Activated CD4-positive, alpha-beta T cell treated with anti-CD3 and anti-CD28 coated beads, Interleukin-2, amount 10 ng/mL, durations not matched to agents 24 days and 14 days (primary cell): ENCODE measurements at regions of chr19 and their contacts with region 1.

Region 1: DNA sequence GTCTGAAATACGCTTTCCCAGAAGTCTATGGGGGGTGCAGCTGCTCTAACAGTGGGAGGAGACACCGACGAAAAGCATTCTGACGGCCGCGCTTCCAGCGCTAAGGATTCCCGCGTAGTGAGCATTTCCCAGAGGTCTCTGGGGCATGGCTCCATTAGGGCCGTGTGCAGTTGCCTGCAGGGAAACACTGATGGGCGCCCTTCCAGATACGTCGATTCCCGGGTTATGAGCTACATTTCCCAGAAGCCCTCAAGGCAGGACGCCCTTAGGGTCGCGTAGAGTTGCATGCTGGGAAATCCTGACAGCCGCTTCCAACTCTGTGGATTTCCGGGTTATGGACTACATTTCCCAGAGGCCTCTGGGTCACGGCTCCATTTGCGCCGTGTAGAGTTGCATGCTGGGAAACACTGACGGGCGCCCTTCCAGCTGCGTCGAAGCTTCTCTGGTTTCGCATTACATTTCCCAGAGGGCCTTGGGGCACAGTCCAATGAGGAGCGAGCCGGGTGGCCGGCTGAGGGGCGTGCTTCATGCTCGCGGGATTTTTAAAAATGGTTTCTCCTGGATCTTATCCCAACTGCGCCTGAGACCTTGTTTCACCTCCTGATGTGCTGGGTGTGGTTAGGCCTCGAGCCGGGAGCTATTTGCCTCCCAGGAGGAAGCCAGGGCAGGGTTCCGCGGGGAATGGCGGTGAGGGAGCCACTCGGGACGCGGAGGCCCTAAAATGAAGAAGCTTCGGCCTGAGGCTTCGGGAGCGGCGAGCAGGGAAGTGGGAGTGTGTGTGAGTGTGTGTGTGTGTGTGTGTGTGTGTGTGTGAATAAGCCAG is 17.2 kb upstream of the ZNF331 start:
- DNase-seq: peak; percentile 95
- H3K4me3 Mint-ChIP-seq: peak overlapping the region; percentile 100
- H3K27ac Mint-ChIP-seq: peak overlapping the region; percentile 94
- H3K4me1 Mint-ChIP-seq: peaks cover 14% of the 10 kb centered on the region
- H3K27me3 Mint-ChIP-seq: no peaks in the 10 kb centered on the region

Region 2: DNA sequence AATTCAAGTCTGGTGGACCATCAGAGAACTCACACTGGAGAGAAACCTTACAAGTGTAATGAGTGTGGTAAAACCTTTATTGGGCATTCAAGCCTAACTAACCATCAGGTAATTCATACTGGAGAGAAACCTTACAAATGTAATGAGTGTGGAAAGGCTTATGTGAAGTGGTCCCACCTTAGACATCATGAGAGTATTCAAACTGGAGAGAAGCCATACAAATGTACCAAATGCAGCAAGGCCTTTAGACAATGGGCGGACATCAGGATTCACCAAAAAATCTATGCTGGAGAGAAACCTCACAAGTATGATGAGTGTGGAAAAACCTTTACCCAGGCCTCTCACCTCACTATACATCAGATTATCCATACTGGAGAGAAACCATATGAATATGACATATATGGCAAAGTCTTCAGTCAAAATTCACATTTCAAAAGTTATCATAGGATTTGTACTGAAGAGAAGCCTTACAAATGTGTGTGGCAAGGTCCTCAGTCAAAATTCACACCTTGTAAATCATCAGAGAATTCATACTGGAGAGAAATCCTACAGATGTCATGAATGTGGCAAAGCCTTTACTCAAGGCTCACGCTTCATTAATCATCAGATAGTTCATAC is 307.9 kb before region 1 on chr19:
- intact Hi-C with region 1: no loop called
- DNase-seq: no peak
- H3K4me3 Mint-ChIP-seq: no peak overlapping the region
- H3K27ac Mint-ChIP-seq: no peak overlapping the region
- H3K4me1 Mint-ChIP-seq: no peaks in the 10 kb centered on the region
- H3K27me3 Mint-ChIP-seq: no peaks in the 10 kb centered on the region

Region 3: GRCh38 chr19:53394974-53395839 is 125.6 kb before region 1 on chr19 and contains the start of gene ZNF765:
- intact Hi-C with region 1: loop called (anchors 1 kb)
- DNase-seq: peak; percentile 99
- H3K4me3 Mint-ChIP-seq: peak within 1 kb of the TSS; percentile 94
- H3K27ac Mint-ChIP-seq: peak within 1 kb of the TSS; percentile 93
- H3K4me1 Mint-ChIP-seq: peaks cover 16% of the 10 kb centered on the region
- H3K27me3 Mint-ChIP-seq: no peaks in the 10 kb centered on the region
- total RNA-seq, gene ZNF765: 11.0 and 11.8 TPM in 2 replicates

Region 4: DNA sequence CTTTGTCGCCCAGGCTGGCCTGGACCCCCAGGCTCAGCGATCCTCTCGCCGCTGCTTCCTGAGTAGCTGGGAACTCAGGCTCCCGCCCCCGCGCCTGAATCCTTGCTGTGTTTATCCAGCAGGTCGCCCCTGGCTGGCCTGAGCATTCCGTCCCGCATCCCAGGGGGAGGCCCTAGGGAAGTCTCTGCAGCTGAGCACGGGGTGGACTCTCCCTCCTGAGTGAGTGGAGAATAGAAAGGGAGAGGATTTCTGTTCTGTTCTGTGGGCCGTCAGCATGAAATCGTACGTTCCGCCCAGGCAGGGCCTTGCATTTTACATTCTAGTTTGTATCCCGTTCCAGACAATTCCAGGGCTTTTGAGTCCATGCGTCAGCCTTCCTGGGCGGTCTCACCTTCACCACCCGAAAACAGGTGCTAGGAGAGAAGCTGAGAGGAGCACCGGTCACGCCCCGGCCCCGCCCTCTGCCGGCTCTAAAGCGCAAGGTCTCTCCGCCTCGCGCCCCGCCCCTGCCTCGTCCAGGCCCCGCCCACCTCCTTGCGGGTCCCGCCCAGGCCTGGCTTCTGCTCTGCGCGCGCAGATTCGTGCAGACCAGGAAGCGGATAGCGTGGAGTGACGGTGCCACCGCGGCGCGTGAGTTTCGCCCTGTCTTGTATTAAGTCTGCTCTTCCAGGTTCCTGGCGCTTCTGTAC is 89.2 kb before region 1 on chr19 and contains the start of gene ZNF761:
- intact Hi-C with region 1: loop called (anchors 5 kb)
- DNase-seq: peak; percentile 99
- H3K4me3 Mint-ChIP-seq: peak within 1 kb of the TSS; percentile 90
- H3K27ac Mint-ChIP-seq: peak within 1 kb of the TSS; percentile 93
- H3K4me1 Mint-ChIP-seq: peaks cover 16% of the 10 kb centered on the region
- H3K27me3 Mint-ChIP-seq: no peaks in the 10 kb centered on the region
- total RNA-seq, gene ZNF761: 9.8 and 11.6 TPM in 2 replicates

Region 5: GRCh38 chr19:53537480-53538383 is 17.0 kb after region 1 on chr19 and contains the start of gene ZNF331:
- intact Hi-C with region 1: loop called (anchors 1 kb)
- DNase-seq: peak; percentile 96
- H3K4me3 Mint-ChIP-seq: peak within 1 kb of the TSS; percentile 97
- H3K27ac Mint-ChIP-seq: peak within 1 kb of the TSS; percentile 99
- H3K4me1 Mint-ChIP-seq: peaks cover 13% of the 10 kb centered on the region
- H3K27me3 Mint-ChIP-seq: peaks cover 2% of the 10 kb centered on the region
- total RNA-seq, gene ZNF331: 18.2 and 18.9 TPM in 2 replicates

Region 6: GRCh38 chr19:53553884-53554791 is 33.4 kb after region 1 on chr19:
- intact Hi-C with region 1: loop called (anchors 1 kb)
- DNase-seq: peak; percentile 97
- H3K4me3 Mint-ChIP-seq: peak overlapping the region; percentile 93
- H3K27ac Mint-ChIP-seq: peak overlapping the region; percentile 97
- H3K4me1 Mint-ChIP-seq: peaks cover 18% of the 10 kb centered on the region
- H3K27me3 Mint-ChIP-seq: no peaks in the 10 kb centered on the region

Region 7: DNA sequence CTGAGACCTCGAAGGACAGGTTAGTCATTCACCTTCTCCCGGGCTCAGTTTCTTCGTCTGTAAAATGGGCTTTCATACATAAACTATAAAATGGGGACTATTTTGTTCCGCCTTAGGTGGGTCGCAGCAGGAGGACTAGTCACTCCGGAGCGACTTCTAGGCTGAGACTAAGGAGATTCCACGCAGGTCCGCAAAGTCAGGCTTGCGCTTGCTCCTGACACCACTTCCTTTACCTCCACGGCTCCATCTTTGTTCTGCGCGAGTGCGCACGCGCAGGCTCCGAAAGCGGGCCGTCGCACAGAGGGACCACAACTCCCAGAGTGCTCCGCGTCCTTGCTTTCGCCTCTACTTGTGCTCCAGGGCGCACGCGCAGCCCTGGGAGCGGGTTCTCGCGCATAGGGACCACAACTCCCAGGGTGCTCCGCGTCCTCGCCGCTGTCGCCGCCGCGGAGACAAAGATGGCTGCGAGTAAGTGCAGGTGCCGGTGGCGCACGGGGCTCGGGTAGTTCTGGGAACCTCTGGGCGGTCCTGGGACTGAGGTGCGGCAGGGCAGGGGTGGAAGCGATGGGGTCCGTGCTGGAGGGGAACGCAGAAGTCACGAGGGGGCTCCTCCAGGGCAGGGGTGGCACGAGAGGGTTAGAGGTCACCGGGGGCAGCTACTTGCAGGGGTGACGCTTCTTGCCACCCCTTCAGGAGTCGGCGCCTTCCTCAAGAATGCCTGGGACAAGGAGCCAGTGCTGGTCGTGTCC is 581.8 kb after region 1 on chr19 and contains the start of gene NDUFA3:
- intact Hi-C with region 1: loop called (anchors 1 kb)
- DNase-seq: peak; percentile 99
- H3K4me3 Mint-ChIP-seq: peak within 1 kb of the TSS; percentile 99
- H3K27ac Mint-ChIP-seq: peak within 1 kb of the TSS; percentile 97
- H3K4me1 Mint-ChIP-seq: peaks cover 22% of the 10 kb centered on the region
- H3K27me3 Mint-ChIP-seq: no peaks in the 10 kb centered on the region
- total RNA-seq, gene NDUFA3: 105 and 131 TPM in 2 replicates